ENCODE measurements at regions of chr11 and their contacts with region 1.

Region 1: DNA sequence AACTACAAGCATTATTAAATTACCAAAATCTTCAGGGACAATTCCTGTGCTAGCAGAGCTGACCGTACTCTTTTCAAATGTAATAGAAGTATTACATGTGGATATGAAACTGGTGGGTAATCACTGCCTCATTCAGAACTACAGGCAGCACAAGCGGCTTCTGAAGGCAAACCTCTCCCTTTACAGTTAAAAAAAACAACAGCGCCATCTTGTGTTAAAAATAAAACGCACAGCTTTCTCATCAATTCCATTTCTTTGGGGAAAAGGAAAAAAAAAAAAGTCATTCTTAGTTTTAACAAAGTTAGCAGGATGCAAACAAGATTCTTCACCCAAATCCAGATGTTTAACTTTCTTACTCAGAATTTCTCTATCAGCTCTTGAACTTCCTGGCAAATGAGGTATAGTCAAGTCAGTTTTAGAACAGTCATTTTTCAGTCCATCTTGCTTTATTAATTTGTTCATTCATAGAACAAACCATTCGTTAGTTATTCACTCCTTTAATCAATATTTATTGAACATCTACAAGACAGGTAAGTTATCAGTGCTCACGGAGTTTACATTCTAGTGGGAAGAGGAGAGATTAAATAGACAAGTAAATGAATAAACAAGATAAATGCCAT is 331.8 kb upstream of the MPPED2 start:
- DNase-seq: peak; percentile 42
- ATAC-seq: no peak
- H3K4me3 ChIP-seq: no peak overlapping the region
- H3K4me3 Mint-ChIP-seq: no peak overlapping the region
- H3K27ac ChIP-seq: no peak overlapping the region
- H3K27ac Mint-ChIP-seq: no peak overlapping the region
- H3K4me1 ChIP-seq: no peaks in the 10 kb centered on the region
- H3K4me1 Mint-ChIP-seq: no peaks in the 10 kb centered on the region
- H3K27me3 ChIP-seq: peaks cover 0 to 7% (median 0%) of the 10 kb centered on the region in 4 experiments
- H3K27me3 Mint-ChIP-seq: peaks cover 17% of the 10 kb centered on the region
- CTCF ChIP-seq: peak; percentile 83

Region 2: DNA sequence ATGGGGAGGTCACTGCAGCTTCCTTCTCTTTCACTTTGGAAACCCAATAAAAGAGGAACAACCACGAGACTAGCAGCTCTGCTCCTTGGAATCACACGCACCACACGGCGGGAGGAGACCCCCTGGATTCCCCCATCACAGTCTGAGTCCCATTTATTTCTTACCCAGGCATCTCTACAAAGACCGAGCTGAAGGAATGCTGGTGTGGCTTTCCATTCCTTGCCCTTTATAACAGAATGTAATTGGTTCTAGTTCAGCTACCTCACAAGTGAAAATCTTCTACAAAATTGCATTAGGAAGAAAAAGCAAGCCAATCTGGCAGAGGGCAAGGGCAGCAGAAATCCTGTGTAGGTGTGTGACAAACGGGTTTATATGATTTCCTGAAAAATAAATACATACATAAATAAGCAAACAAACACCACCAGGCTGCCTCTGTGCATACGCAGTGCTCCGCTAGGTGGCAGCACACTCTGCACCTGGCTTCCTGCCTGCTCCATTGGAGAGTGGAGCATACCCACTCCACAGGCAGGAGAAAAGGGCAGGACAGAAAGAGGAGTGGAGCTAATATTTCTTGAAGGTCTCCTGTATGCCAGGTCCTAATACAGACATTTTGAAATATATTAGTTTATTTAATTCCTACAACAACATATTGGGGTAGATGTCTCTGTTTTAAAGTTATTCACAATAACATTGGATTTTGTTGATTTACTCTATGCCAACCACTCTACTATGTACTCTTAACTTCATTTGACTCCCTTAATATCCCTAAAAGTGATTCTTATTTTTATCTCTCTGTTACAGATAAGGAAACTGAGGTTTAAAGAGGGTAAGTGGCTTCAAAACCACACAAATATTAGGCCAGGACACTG is 1574.3 kb before region 1 on chr11:
- CTCF ChIA-PET with region 1: no interaction called
- POLR2A ChIA-PET with region 1: no interaction called
- intact Hi-C with region 1: loop called (anchors 5 kb)
- DNase-seq: peak; percentile 6
- ATAC-seq: peak; percentile 53
- H3K4me3 ChIP-seq: no peak overlapping the region
- H3K4me3 Mint-ChIP-seq: no peak overlapping the region
- H3K27ac ChIP-seq: no peak overlapping the region
- H3K27ac Mint-ChIP-seq: no peak overlapping the region
- H3K4me1 ChIP-seq: no peaks in the 10 kb centered on the region
- H3K4me1 Mint-ChIP-seq: no peaks in the 10 kb centered on the region
- H3K27me3 ChIP-seq: no peaks in the 10 kb centered on the region
- H3K27me3 Mint-ChIP-seq: no peaks in the 10 kb centered on the region
- CTCF ChIP-seq: peak; percentile 76

Region 3: GRCh38 chr11:29432719-29433325 is 1485.1 kb before region 1 on chr11:
- CTCF ChIA-PET with region 1: interaction called, 8 read pairs
- POLR2A ChIA-PET with region 1: no interaction called
- intact Hi-C with region 1: loop called (anchors 5 kb)
- DNase-seq: no peak
- ATAC-seq: no peak
- H3K4me3 ChIP-seq: no peak overlapping the region
- H3K4me3 Mint-ChIP-seq: no peak overlapping the region
- H3K27ac ChIP-seq: no peak overlapping the region
- H3K27ac Mint-ChIP-seq: no peak overlapping the region
- H3K4me1 ChIP-seq: no peaks in the 10 kb centered on the region
- H3K4me1 Mint-ChIP-seq: no peaks in the 10 kb centered on the region
- H3K27me3 ChIP-seq: no peaks in the 10 kb centered on the region
- H3K27me3 Mint-ChIP-seq: no peaks in the 10 kb centered on the region
- CTCF ChIP-seq: peak; percentile 48

Region 4: DNA sequence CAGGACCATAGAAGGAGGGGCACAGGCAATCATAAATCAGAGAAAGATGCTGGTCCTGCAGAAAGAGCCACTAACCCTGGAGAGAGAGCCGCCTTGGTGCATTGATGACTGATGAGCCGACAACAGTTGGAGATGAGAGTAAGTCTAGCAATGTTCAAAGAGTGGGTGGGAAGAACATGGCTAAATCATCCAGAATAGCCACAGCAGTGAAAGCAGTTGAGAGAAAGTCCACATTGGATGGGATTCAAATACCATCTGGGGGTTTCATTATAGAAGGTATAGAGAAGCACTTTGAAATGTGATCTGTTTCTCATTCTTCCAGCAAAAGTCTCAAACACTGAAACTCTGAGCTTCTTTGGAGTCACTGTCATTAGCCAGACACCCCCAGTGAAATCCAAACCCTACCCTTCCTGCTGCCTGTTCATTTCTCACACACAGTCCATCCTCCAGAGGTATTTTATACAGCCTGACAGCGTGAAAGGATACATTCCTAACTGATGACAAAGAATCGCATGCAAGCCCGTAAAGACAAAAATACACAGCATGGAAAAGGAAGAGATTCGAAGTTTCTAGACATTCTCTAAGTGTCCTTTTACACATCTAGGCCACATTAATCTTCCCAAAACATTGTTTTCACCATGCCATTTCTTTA is 28.7 kb before region 1 on chr11:
- CTCF ChIA-PET with region 1: no interaction called
- POLR2A ChIA-PET with region 1: no interaction called
- intact Hi-C with region 1: no loop called
- DNase-seq: no peak
- ATAC-seq: no peak
- H3K4me3 ChIP-seq: no peak overlapping the region
- H3K4me3 Mint-ChIP-seq: no peak overlapping the region
- H3K27ac ChIP-seq: no peak overlapping the region
- H3K27ac Mint-ChIP-seq: no peak overlapping the region
- H3K4me1 ChIP-seq: no peaks in the 10 kb centered on the region
- H3K4me1 Mint-ChIP-seq: no peaks in the 10 kb centered on the region
- H3K27me3 ChIP-seq: no peaks in the 10 kb centered on the region
- H3K27me3 Mint-ChIP-seq: peaks cover 4% of the 10 kb centered on the region
- CTCF ChIP-seq: no peak

Measured in B cell (primary cell).